IMR-90 (cell line): ENCODE measurements at regions of chr9 and their contacts with region 1.

Region 1: DNA sequence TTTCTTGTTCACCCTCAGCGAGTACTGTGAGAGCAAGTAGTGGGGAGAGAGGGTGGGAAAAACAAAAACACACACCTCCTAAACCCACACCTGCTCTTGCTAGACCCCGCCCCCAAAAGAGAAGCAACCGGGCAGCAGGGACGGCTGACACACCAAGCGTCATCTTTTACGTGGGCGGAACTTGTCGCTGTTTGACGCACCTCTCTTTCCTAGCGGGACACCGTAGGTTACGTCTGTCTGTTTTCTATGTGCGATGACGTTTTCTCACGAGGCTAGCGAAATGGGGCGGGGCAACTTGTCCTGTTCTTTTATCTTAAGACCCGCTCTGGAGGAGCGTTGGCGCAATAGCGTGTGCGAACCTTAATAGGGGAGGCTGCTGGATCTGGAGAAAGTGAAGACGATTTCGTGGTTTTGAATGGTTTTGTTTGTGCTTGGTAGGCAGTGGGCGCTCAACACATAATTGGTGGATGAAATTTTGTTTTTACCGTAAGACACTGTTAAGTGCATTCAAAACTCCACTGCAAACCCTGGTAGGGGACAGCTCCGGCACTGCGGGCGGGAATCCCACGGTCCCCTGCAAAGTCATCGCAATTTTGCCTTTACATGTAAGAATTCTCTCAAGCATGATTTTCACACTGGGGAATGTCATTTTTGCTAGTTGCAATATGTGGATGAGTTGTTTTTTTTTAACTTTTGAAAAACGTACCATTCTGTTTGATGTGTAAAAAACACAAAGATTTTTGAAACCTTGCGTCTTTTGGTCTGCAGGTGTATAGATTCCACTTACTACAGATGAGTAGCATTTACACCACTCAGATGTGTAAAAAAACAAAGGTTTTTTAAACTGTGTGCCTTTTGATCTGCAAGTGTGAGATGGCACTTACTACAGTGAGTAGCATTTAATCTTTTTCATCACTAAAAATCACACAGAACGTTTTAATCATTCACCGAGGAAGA is 631 bp upstream of the C9orf72 start:
- DNase-seq: peak; percentile 99
- ATAC-seq: peak; percentile 79
- H3K4me3 ChIP-seq: peak overlapping the region; percentile 54
- H3K27ac ChIP-seq: peak overlapping the region; percentile 22
- H3K4me1 ChIP-seq: no peaks in the 10 kb centered on the region; the same call in 1 of the 2 replicates
- H3K27me3 ChIP-seq: no peaks in the 10 kb centered on the region
- CTCF ChIP-seq: no peak
- POLR2A ChIP-seq: no peak
- RAD21 ChIP-seq: no peak

Region 2: DNA sequence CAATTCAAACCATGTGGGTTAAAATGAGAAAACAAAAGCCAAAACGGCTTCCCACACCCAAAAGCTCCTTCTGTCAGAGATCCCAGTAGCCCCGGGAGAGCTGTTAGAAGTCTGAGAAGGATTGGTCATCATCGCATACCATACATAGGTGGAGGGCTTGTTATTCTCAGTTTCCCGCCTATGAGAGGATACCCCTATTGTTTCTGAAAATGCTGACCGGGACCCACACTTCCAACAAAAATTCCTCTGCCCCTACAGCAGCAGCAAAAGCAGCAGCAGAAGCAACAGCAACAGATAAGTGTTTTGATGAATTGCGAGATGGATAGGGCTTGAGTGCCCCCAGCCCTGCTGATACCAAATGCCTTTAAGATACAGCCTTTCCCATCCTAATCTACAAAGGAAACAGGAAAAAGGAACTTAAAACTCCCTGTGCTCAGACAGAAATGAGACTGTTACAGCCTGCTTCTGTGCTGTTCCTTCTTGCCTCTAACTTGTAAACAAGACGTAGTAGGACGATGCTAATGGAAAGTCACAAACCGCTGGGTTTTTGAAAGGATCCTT is 464.9 kb before region 1 on chr9 and contains the start of gene TEK:
- CTCF ChIA-PET with region 1: no interaction called
- POLR2A ChIA-PET with region 1: no interaction called
- dilution Hi-C with region 1: no loop called
- in situ Hi-C with region 1: no loop called
- intact Hi-C with region 1: no loop called
- DNase-seq: peak; percentile 44
- ATAC-seq: peak; percentile 57
- H3K4me3 ChIP-seq: peak within 1 kb of the TSS; percentile 55
- H3K27ac ChIP-seq: peak within 1 kb of the TSS; percentile 95
- H3K4me1 ChIP-seq: peaks cover 11% of the 10 kb centered on the region
- H3K27me3 ChIP-seq: no peaks in the 10 kb centered on the region
- CTCF ChIP-seq: no peak
- POLR2A ChIP-seq: no peak
- RAD21 ChIP-seq: no peak
- total RNA-seq, gene TEK: 10.8 and 11.7 TPM in 2 replicates

Region 3: DNA sequence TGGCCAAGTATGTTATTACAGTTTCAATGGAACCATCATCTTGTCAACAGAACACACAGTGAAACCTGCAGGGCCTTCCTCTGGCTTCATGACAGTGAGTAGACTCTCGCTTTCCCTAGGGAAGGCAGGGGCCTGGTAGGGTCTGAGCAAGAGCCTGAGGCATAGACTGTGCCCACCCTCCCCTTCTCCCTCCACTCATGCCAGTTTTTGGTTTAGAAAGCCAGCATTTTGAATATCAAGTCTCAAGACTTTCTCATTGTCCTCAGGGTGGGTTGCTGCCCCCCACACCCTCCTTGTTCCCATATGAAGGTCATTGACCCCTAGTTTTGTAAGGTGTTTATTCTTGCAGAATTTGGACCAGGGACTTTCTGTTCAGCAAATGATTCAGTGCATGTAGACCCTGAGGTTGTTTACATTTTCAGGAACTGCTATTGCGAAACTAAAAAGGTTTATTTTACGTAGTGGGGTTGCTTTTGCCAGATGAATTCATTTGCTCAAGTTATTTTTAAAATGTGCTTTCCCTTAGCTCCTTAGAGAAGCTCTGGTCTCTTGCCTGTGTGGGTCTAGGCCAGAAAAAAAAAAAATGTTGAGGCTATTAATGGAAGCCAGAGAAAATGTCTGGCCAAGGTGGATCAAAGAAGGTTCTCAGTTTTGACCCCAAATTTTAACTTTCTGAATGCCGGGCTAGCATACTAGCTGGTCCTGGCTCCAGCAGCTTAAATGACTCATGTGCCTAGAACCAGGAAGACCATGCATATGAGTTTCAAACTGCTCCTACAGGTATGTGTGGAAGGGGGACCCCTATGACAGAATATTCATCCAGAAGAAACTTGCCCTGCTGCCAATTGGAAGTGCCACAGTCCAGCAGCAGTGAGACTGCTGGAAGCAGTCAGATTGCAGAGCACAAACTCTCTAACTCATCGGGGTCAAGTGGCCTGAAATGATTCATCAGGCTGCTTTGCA is 34.2 kb before region 1 on chr9:
- CTCF ChIA-PET with region 1: no interaction called
- POLR2A ChIA-PET with region 1: no interaction called
- dilution Hi-C with region 1: no loop called
- in situ Hi-C with region 1: no loop called
- intact Hi-C with region 1: loop called (anchors 1 kb)
- DNase-seq: peak; percentile 87
- ATAC-seq: peak; percentile 83
- H3K4me3 ChIP-seq: no peak overlapping the region
- H3K27ac ChIP-seq: peak overlapping the region; percentile 60; the same call in 1 of the 2 replicates
- H3K4me1 ChIP-seq: peaks cover 11% of the 10 kb centered on the region
- H3K27me3 ChIP-seq: no peaks in the 10 kb centered on the region
- CTCF ChIP-seq: no peak
- POLR2A ChIP-seq: no peak
- RAD21 ChIP-seq: no peak

Region 4: DNA sequence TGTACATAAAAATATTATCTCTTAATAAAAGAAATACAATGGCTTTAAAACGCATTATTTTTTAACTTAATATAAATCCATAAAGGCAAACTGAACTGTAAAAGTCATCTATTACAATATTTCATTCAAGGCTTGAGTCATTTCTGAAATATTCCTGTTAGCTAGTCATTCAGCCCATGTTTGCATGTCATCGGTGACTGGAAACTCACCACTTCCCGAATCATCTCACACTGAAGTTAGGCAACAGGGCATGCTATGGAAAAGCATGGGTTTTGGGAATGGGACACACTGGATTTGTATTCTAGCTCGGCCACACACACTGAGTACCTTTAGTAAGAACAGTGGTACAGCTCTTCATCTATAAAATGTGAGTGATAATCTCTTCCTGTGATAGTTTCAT is 690.5 kb after region 1 on chr9:
- CTCF ChIA-PET with region 1: no interaction called
- POLR2A ChIA-PET with region 1: no interaction called
- dilution Hi-C with region 1: no loop called
- in situ Hi-C with region 1: no loop called
- intact Hi-C with region 1: no loop called
- DNase-seq: peak; percentile 6
- ATAC-seq: no peak
- H3K4me3 ChIP-seq: no peak overlapping the region
- H3K27ac ChIP-seq: no peak overlapping the region
- H3K4me1 ChIP-seq: no peaks in the 10 kb centered on the region
- H3K27me3 ChIP-seq: no peaks in the 10 kb centered on the region
- CTCF ChIP-seq: no peak
- POLR2A ChIP-seq: no peak
- RAD21 ChIP-seq: no peak